ENCODE measurements at regions of chr15 and their contacts with region 1.

Region 1: GRCh38 chr15:72199711-72200212 is 2.2 kb upstream of the GRAMD2A start:
- DNase-seq: peak; percentile 89 to 93
- ATAC-seq: peak; percentile 33 to 68
- H3K4me3 ChIP-seq: no peak overlapping the region
- H3K27ac ChIP-seq: peak overlapping the region in 1 of 2 experiments; percentile 26; a peak in 3 of 6 replicates
- H3K4me1 ChIP-seq: peaks cover 54% of the 10 kb centered on the region
- CTCF ChIP-seq: peak; percentile 94
- EP300 ChIP-seq: no peak
- POLR2A ChIP-seq: no peak
- RAD21 ChIP-seq: peak; percentile 92 to 94

Region 2: DNA sequence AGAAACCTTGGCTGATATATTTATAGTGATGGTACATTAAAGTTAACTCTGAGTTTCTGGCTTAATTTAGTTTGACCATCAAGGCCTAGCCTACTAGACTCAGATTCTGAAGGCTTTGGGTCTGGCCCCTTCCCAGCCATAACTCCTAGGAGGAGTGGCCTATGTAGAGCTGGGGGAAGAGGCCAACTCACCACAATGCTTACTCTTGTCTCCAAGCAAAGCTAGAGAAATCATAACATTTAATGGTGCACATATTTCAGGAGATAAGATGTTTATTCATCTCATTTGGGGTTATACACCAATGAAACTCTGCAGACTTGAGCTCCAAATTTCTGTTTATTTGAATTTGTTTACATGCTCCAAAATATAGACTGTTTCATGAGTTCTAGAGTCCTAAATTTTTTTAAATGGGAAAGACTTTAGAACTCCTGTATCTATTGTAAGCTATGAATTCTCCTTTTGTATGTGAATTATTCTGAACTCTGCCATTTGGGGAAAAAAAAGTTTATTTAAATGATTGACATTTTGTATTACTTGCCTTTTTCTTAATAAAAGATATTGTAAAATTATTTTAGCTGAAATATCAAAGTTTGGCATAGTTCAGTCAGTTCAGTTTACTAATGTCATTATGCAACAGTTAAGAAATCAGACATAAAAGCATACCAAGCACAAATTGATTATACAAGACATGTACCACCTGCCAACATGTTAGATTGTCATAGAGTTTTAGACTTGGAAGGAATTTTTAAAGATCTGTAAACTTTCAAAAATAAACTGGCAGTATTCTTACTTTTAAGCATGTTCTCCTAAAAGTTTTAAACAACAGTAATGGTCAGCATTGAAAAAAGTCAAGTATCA is 532.8 kb before region 1 on chr15:
- CTCF ChIA-PET with region 1: no interaction called
- POLR2A ChIA-PET with region 1: no interaction called
- DNase-seq: no peak
- ATAC-seq: no peak
- H3K4me3 ChIP-seq: no peak overlapping the region
- H3K27ac ChIP-seq: no peak overlapping the region
- H3K4me1 ChIP-seq: no peaks in the 10 kb centered on the region
- CTCF ChIP-seq: no peak
- EP300 ChIP-seq: no peak
- POLR2A ChIP-seq: no peak
- RAD21 ChIP-seq: no peak

Region 3: GRCh38 chr15:72189250-72189902 is 10.4 kb before region 1 on chr15:
- CTCF ChIA-PET with region 1: interaction called, 23 read pairs
- POLR2A ChIA-PET with region 1: no interaction called
- DNase-seq: no peak
- ATAC-seq: no peak
- H3K4me3 ChIP-seq: no peak overlapping the region
- H3K27ac ChIP-seq: no peak overlapping the region
- H3K4me1 ChIP-seq: peaks cover 14% of the 10 kb centered on the region
- CTCF ChIP-seq: no peak
- EP300 ChIP-seq: no peak
- POLR2A ChIP-seq: no peak
- RAD21 ChIP-seq: no peak

Region 4: DNA sequence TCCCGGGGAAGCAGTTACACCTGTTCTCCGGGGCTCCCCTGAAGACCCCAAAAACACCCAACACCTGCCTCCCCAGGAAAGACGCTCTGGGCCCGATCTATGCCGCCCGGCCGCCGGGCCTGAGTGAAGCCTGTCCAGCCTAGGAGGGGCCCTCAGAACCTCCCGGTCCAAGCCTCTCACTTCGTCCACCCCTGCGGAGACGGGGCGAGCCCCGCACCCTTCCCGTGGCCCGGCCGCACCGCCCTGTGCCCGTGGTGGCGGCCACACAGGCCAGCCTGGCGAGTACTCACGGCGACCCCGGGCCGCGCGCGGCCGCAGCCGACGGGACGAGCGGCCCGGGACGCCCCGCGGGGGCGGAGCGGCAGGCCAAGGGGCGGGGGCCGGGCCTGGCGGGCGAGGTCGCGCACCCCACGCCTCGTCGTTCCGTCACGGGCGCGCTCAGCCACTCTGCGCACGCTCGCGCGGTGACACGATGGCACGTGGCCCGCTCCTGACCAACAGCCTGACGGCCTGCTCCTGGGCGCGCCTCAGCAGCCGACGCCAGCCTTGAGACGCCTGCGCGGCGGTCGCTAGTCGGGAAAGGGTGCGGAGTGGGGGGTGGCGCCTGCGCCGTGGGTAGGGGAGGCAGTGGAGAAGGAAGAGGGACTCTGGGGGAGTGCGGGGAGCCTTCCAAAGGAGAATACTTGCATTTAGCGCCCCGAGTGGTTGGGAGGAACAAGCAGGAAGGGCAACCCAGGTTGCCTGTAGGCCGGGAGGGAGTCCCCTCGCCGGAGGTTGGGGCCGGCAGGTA is 72.6 kb after region 1 on chr15 and contains the start of gene PARP6:
- CTCF ChIA-PET with region 1: interaction called, 17 read pairs
- POLR2A ChIA-PET with region 1: no interaction called
- DNase-seq: peak; percentile 100
- ATAC-seq: peak; percentile 95 to 99
- H3K4me3 ChIP-seq: peak within 1 kb of the TSS; percentile 80
- H3K27ac ChIP-seq: peak within 1 kb of the TSS; percentile 91 to 95
- H3K4me1 ChIP-seq: peaks cover 18% of the 10 kb centered on the region
- CTCF ChIP-seq: peak; percentile 75
- EP300 ChIP-seq: no peak
- POLR2A ChIP-seq: peak; percentile 90
- RAD21 ChIP-seq: peak in 1 of 2 experiments; percentile 23; a peak in 1 of 5 replicates
- polyA plus RNA-seq, gene PARP6: 167 and 197 TPM in 2 replicates